ENCODE measurements at regions of chr6 and their contacts with region 1.

Region 1: GRCh38 chr6:217048-217659 is 75.1 kb upstream of the DUSP22 start:
- DNase-seq: peak; percentile 55
- ATAC-seq: 0 out of 3 replicates have a peak, but pooled peaks have one; percentile 1
- H3K4me3 ChIP-seq: peak overlapping the region; percentile 13; the same call in 1 of the 2 replicates
- H3K27ac ChIP-seq: peak overlapping the region; percentile 94
- H3K4me1 ChIP-seq: peaks cover 86% of the 10 kb centered on the region
- H3K27me3 ChIP-seq: no peaks in the 10 kb centered on the region
- CTCF ChIP-seq: peak; percentile 57 to 73 (median 73)
- EP300 ChIP-seq: no peak
- POLR2A ChIP-seq: no peak
- RAD21 ChIP-seq: peak; percentile 54

Region 2: GRCh38 chr6:203661-204060 is 13.5 kb before region 1 on chr6:
- CTCF ChIA-PET with region 1: interaction called, 460 read pairs
- POLR2A ChIA-PET with region 1: interaction called, 6 read pairs
- RAD21 ChIA-PET with region 1: interaction called, 519 read pairs
- SMC1A ChIA-PET with region 1: interaction called, 748 read pairs
- in situ Hi-C with region 1: no loop called
- intact Hi-C with region 1: no loop called
- DNase-seq: no peak
- ATAC-seq: no peak
- H3K4me3 ChIP-seq: no peak overlapping the region
- H3K27ac ChIP-seq: no peak overlapping the region
- H3K4me1 ChIP-seq: peaks cover 6% of the 10 kb centered on the region
- H3K27me3 ChIP-seq: no peaks in the 10 kb centered on the region; a peak in 1 of 4 replicates
- CTCF ChIP-seq: no peak
- EP300 ChIP-seq: no peak
- POLR2A ChIP-seq: no peak
- RAD21 ChIP-seq: no peak

Region 3: GRCh38 chr6:286681-287488 is 69.7 kb after region 1 on chr6:
- CTCF ChIA-PET with region 1: interaction called, 5 read pairs
- POLR2A ChIA-PET with region 1: interaction called, 11 read pairs
- RAD21 ChIA-PET with region 1: interaction called, 11 read pairs
- SMC1A ChIA-PET with region 1: interaction called, 19 read pairs
- in situ Hi-C with region 1: no loop called
- intact Hi-C with region 1: no loop called
- DNase-seq: no peak
- ATAC-seq: peak; percentile 48
- H3K4me3 ChIP-seq: peak overlapping the region; percentile 2; the same call in 1 of the 2 replicates
- H3K27ac ChIP-seq: peak overlapping the region; percentile 53
- H3K4me1 ChIP-seq: peaks cover 54% of the 10 kb centered on the region
- H3K27me3 ChIP-seq: no peaks in the 10 kb centered on the region
- CTCF ChIP-seq: no peak
- EP300 ChIP-seq: 0 out of 4 replicates have a peak, but pooled peaks have one; percentile 42 to 61
- POLR2A ChIP-seq: no peak
- RAD21 ChIP-seq: 0 out of 2 replicates have a peak, but pooled peaks have one; percentile 7

Region 4: GRCh38 chr6:313087-313486 is 95.9 kb after region 1 on chr6:
- CTCF ChIA-PET with region 1: interaction called, 9 read pairs
- POLR2A ChIA-PET with region 1: interaction called, 6 read pairs
- RAD21 ChIA-PET with region 1: interaction called, 131 read pairs
- SMC1A ChIA-PET with region 1: interaction called, 14 read pairs
- in situ Hi-C with region 1: no loop called
- intact Hi-C with region 1: no loop called
- DNase-seq: no peak
- ATAC-seq: peak; percentile 1; the same call in 1 of the 3 replicates
- H3K4me3 ChIP-seq: no peak overlapping the region
- H3K27ac ChIP-seq: peak overlapping the region; percentile 65
- H3K4me1 ChIP-seq: peaks cover 93% of the 10 kb centered on the region
- H3K27me3 ChIP-seq: no peaks in the 10 kb centered on the region
- CTCF ChIP-seq: no peak
- EP300 ChIP-seq: no peak
- POLR2A ChIP-seq: no peak
- RAD21 ChIP-seq: no peak

Region 5: GRCh38 chr6:379367-380181 is 162.4 kb after region 1 on chr6:
- CTCF ChIA-PET with region 1: no interaction called
- POLR2A ChIA-PET with region 1: no interaction called
- RAD21 ChIA-PET with region 1: no interaction called
- SMC1A ChIA-PET with region 1: no interaction called
- in situ Hi-C with region 1: no loop called
- intact Hi-C with region 1: no loop called
- DNase-seq: no peak
- ATAC-seq: peak; percentile 34
- H3K4me3 ChIP-seq: no peak overlapping the region
- H3K27ac ChIP-seq: no peak overlapping the region
- H3K4me1 ChIP-seq: peaks cover 52% of the 10 kb centered on the region
- H3K27me3 ChIP-seq: no peaks in the 10 kb centered on the region
- CTCF ChIP-seq: no peak
- EP300 ChIP-seq: no peak
- POLR2A ChIP-seq: no peak
- RAD21 ChIP-seq: 0 out of 2 replicates have a peak, but pooled peaks have one; percentile 4

Region 6: DNA sequence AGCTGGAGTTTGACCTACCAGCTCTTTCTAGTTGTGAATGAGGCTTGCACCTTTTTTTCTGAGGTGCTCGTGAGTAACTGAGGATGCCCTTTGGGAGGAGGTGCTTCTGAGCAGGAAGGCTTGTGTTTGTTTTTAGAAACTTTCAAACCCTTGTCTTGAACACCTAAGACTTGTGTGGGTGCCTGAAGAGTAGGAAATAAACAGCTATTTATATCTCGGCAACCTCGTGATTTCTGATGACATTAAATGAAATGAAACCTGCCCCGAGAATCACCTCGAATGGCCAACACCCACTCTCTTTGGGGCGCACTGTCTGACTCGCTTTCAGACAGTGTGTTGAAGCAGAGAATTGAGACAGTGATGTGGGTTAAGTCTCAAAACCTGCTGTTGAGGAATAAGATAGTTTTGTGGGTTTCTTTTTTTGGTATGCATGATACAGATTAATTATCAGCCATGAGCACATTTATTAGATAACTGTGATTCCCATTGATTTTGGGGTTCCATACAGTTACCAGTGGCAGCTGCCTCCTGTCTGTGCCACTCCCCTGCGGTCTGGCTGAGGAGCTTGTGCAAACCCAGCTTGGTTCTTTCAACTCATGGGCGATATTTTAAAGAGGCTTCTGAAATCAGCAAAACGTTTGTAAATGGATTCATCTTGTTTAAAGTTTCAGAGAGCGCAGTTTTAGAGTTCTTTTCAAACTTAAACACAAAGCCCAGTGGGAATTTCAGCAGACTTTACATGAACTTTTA is 182.8 kb after region 1 on chr6:
- CTCF ChIA-PET with region 1: interaction called, 5 read pairs
- POLR2A ChIA-PET with region 1: interaction called, 3 read pairs
- RAD21 ChIA-PET with region 1: interaction called, 11 read pairs
- SMC1A ChIA-PET with region 1: interaction called, 185 read pairs
- in situ Hi-C with region 1: loop called (anchors 10 kb)
- intact Hi-C with region 1: no loop called
- DNase-seq: no peak
- ATAC-seq: peak; percentile 10
- H3K4me3 ChIP-seq: peak overlapping the region; percentile 61
- H3K27ac ChIP-seq: peak overlapping the region; percentile 39
- H3K4me1 ChIP-seq: peaks cover 35% of the 10 kb centered on the region
- H3K27me3 ChIP-seq: no peaks in the 10 kb centered on the region
- CTCF ChIP-seq: no peak
- EP300 ChIP-seq: peak; percentile 56 to 84; a peak in 2 of 4 replicates
- POLR2A ChIP-seq: peak; percentile 89
- RAD21 ChIP-seq: 0 out of 2 replicates have a peak, but pooled peaks have one; percentile 1

Measured in GM12878 (cell line).